ENCODE measurements at regions of chr1 and their contacts with region 1.

Region 1: DNA sequence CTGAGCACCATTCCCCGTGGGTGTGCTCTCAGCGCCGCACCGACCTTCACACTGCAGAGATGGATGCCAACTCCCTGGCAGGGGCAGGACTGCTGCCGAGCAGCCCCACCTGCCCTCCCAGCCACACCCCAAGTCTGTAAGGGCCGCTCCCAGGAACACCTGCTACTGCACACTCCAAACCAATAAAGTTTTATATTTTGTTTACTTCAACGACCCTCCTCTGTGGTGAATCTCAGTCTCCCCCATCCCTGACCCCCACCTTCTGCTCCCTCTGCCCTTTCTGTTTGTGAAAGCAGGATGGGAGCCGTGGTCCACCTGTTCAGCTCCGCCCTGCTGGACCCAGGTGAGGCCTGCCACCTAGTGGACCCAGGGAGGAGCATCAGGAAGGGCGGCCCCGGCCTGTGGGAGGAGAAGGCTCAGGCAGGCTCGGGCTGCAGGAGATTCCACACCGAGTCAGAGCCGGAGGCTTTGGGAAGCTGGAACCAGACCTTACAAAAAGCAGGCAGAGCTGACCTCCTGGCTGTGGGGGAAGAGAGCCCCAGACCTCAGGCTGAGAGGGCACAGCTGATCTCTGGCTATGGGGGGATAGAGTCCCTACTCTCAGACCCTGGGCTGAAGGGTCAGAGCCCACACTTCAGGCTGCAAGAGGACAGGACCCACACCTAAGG is 982 bp upstream of the TMEM82 start:
- DNase-seq: peak; percentile 93
- H3K4me3 Mint-ChIP-seq: no peak overlapping the region
- H3K27ac Mint-ChIP-seq: peak overlapping the region; percentile 46
- H3K4me1 Mint-ChIP-seq: peaks cover 4% of the 10 kb centered on the region
- H3K27me3 Mint-ChIP-seq: no peaks in the 10 kb centered on the region

Region 2: DNA sequence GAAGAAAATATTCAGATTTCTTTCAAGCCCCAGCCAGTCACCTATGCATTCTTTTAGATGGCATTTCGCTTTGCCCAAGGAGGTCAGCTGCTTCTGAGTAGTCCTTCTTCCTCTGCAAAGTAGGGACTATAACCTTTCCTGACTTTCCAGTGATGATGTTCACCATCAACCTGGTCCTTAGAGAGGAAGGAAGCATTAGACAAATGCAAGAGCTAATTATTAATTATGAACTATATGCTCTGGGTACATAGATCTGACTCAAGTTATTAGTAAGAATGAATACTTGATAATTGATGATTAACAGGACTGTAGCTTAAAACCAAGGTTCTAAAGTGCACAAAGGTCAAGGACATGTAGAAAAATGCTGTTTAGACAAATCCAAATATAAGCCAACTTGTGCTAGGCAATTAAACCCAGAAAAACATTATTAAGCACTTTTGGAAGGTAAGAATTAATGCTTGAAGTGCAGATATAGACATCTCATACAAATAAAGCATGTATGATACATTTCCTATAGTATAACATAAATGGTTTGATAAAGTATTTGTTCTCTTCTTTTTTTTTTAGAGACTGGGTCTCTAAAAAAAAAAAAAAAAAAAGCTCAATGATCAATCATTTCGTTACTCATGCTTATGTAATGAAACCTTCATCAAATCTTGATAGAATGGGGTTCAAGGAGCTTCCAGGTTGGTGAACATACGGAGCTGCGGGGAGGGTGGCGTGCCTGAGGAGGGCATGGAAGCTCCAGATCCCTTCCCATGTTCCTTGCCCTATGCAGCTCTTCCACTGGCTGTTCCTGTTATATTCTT is 145.3 kb before region 1 on chr1:
- intact Hi-C with region 1: loop called (anchors 1 kb)
- DNase-seq: no peak
- H3K4me3 Mint-ChIP-seq: no peak overlapping the region
- H3K27ac Mint-ChIP-seq: no peak overlapping the region
- H3K4me1 Mint-ChIP-seq: peaks cover 4% of the 10 kb centered on the region
- H3K27me3 Mint-ChIP-seq: peaks cover 5% of the 10 kb centered on the region